ENCODE measurements at regions of chr6 and their contacts with region 1.

Region 1: GRCh38 chr6:108492131-108492766 is 68.5 kb upstream of the FOXO3 start:
- DNase-seq: peak; percentile 61
- ATAC-seq: peak; percentile 93
- H3K4me3 ChIP-seq: no peak overlapping the region
- H3K27ac ChIP-seq: no peak overlapping the region
- H3K4me1 ChIP-seq: no peaks in the 10 kb centered on the region
- H3K27me3 ChIP-seq: no peaks in the 10 kb centered on the region
- CTCF ChIP-seq: peak; percentile 84

Region 2: GRCh38 chr6:108105571-108105970 is 386.7 kb before region 1 on chr6:
- CTCF ChIA-PET with region 1: interaction called, 12 read pairs
- POLR2A ChIA-PET with region 1: no interaction called
- in situ Hi-C with region 1: no loop called
- intact Hi-C with region 1: no loop called
- DNase-seq: no peak
- ATAC-seq: no peak
- H3K4me3 ChIP-seq: no peak overlapping the region
- H3K27ac ChIP-seq: no peak overlapping the region
- H3K4me1 ChIP-seq: no peaks in the 10 kb centered on the region
- H3K27me3 ChIP-seq: no peaks in the 10 kb centered on the region; the same call in 1 of the 2 replicates
- CTCF ChIP-seq: no peak

Region 3: GRCh38 chr6:108113557-108114519 is 378.4 kb before region 1 on chr6:
- CTCF ChIA-PET with region 1: interaction called, 12 read pairs
- POLR2A ChIA-PET with region 1: no interaction called
- in situ Hi-C with region 1: no loop called
- intact Hi-C with region 1: loop called (anchors 2 kb)
- DNase-seq: no peak
- ATAC-seq: peak; percentile 58
- H3K4me3 ChIP-seq: peak overlapping the region; percentile 17 to 46; a peak in 3 of 4 replicates
- H3K27ac ChIP-seq: no peak overlapping the region
- H3K4me1 ChIP-seq: peaks cover 16% of the 10 kb centered on the region
- H3K27me3 ChIP-seq: peaks cover 16% of the 10 kb centered on the region
- CTCF ChIP-seq: peak; percentile 78

Region 4: DNA sequence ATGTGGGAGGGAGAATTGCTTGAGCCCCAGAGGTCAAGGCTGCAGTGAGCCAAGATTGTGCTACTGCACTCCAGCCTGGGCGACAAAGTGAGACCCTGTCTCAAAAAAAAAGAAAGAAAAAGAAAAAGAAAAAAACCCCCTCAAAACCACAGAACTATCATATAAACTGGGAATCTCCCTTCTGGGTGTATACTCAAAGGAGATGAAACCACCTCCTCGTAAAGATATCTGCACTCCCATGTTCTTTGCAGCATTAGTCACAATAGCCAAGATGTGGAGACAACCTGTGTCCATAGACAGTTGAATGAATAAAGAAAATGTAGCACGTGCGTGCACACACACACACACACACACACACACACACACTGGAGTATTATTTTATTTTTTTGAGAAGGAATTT is 205.9 kb before region 1 on chr6:
- CTCF ChIA-PET with region 1: no interaction called
- POLR2A ChIA-PET with region 1: no interaction called
- in situ Hi-C with region 1: no loop called
- intact Hi-C with region 1: loop called (anchors 1 kb)
- DNase-seq: no peak
- ATAC-seq: no peak
- H3K4me3 ChIP-seq: no peak overlapping the region
- H3K27ac ChIP-seq: no peak overlapping the region
- H3K4me1 ChIP-seq: no peaks in the 10 kb centered on the region
- H3K27me3 ChIP-seq: no peaks in the 10 kb centered on the region
- CTCF ChIP-seq: no peak

Region 5: GRCh38 chr6:108782179-108783041 is 290.2 kb after region 1 on chr6:
- CTCF ChIA-PET with region 1: interaction called, 16 read pairs
- POLR2A ChIA-PET with region 1: no interaction called
- in situ Hi-C with region 1: no loop called
- intact Hi-C with region 1: no loop called
- DNase-seq: peak; percentile 96
- ATAC-seq: peak; percentile 96
- H3K4me3 ChIP-seq: peak overlapping the region; percentile 49 to 68
- H3K27ac ChIP-seq: peak overlapping the region; percentile 49
- H3K4me1 ChIP-seq: peaks cover 11% of the 10 kb centered on the region
- H3K27me3 ChIP-seq: no peaks in the 10 kb centered on the region; the same call in 1 of the 2 replicates
- CTCF ChIP-seq: peak; percentile 97

Measured in Panc1 (cell line).